ENCODE measurements at regions of chr2 and their contacts with region 1.

Region 1: GRCh38 chr2:161136696-161137324 is 23.4 kb upstream of the TANK start:
- DNase-seq: peak; percentile 87
- ATAC-seq: peak; percentile 80
- H3K4me3 ChIP-seq: peak overlapping the region; percentile 81
- H3K27ac ChIP-seq: peak overlapping the region; percentile 95
- H3K4me1 ChIP-seq: no peaks in the 10 kb centered on the region
- H3K27me3 ChIP-seq: no peaks in the 10 kb centered on the region
- CTCF ChIP-seq: no peak
- EP300 ChIP-seq: no peak; a peak in 1 of 4 replicates
- POLR2A ChIP-seq: peak; percentile 56
- RAD21 ChIP-seq: no peak

Region 2: DNA sequence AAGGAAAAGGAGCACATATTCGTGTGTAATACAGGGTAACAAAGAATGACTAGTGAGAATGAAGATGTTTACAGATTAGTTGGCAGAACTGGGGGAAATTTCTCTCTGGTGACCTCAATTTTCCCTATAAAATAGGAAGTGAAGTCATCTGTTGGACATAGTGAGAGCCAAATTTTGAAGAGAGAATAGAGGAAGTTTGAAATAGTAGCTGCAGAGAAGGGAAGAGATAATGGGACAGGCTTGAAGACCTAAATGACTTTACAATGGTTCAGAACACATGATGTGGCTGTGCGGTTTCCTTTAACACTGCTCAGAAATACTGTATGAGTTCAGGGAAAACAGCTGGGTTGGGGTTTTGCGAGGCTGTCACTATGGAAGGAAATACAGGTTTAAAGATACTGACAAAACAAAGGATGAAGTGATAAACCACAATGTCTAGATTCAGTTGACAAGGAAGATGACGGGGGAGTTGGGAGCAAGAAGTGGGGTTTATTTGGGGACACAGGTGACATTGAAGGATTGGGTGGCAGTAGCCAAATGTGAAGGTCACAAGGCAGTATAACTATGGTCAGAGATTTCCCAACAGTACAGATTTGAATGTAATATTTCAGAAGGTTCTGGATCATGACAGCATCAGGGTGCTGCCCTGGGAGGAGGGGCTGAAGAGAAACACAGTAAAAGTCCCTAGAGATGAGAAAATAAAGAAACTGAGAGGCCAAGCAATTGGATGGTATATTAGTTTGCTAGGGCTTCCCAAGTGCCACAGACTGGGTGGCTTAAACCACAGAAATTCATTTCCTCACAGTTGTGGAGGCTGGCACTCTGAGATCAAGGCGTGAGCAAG is 59.2 kb before region 1 on chr2:
- CTCF ChIA-PET with region 1: interaction called, 4 read pairs
- POLR2A ChIA-PET with region 1: interaction called, 4 read pairs
- RAD21 ChIA-PET with region 1: interaction called, 12 read pairs
- SMC1A ChIA-PET with region 1: interaction called, 12 read pairs
- in situ Hi-C with region 1: no loop called
- intact Hi-C with region 1: loop called (anchors 1 kb)
- DNase-seq: peak; percentile 81
- ATAC-seq: peak; percentile 90
- H3K4me3 ChIP-seq: no peak overlapping the region
- H3K27ac ChIP-seq: peak overlapping the region; percentile 71
- H3K4me1 ChIP-seq: peaks cover 20% of the 10 kb centered on the region
- H3K27me3 ChIP-seq: no peaks in the 10 kb centered on the region
- CTCF ChIP-seq: no peak
- EP300 ChIP-seq: peak; percentile 70 to 74
- POLR2A ChIP-seq: no peak
- RAD21 ChIP-seq: 0 out of 2 replicates have a peak, but pooled peaks have one; percentile 5

Region 3: DNA sequence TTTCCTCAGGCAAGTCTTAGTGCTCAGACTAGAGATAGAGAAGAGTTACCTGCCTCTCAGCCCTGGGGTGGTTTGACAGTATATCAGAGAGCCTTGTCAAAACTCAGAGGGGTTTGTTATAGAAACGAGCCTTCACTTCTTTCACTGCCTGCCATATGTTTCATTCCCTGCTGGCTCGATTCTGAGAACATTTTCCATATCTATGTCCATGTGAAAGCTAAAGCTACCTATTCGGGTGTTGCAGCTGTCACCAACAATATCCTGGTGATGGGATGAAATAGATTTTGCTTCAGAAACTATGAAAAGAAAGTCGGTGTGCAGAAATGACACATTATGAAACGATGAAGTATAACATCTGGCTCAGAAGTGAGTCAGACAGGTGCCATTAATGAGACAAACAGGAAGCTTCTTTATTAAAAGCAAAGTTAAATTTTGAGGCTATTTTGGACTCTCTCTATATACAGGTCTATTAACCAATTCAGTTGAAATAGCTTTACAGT is 32.7 kb before region 1 on chr2:
- CTCF ChIA-PET with region 1: interaction called, 11 read pairs
- POLR2A ChIA-PET with region 1: interaction called, 22 read pairs
- RAD21 ChIA-PET with region 1: interaction called, 71 read pairs
- SMC1A ChIA-PET with region 1: interaction called, 130 read pairs
- in situ Hi-C with region 1: no loop called
- intact Hi-C with region 1: loop called (anchors 1 kb)
- DNase-seq: peak; percentile 72
- ATAC-seq: peak; percentile 89
- H3K4me3 ChIP-seq: 0 out of 2 replicates have a peak overlapping the region, but pooled peaks have one; percentile 6
- H3K27ac ChIP-seq: peak overlapping the region; percentile 55
- H3K4me1 ChIP-seq: peaks cover 19% of the 10 kb centered on the region
- H3K27me3 ChIP-seq: no peaks in the 10 kb centered on the region
- CTCF ChIP-seq: no peak
- EP300 ChIP-seq: peak in 1 of 2 experiments; percentile 89; a peak in 3 of 4 replicates
- POLR2A ChIP-seq: no peak
- RAD21 ChIP-seq: peak; percentile 16; the same call in 1 of the 2 replicates

Region 4: GRCh38 chr2:161122772-161123530 is 13.9 kb before region 1 on chr2:
- CTCF ChIA-PET with region 1: interaction called, 4 read pairs
- POLR2A ChIA-PET with region 1: interaction called, 10 read pairs
- RAD21 ChIA-PET with region 1: interaction called, 11 read pairs
- SMC1A ChIA-PET with region 1: interaction called, 40 read pairs
- in situ Hi-C with region 1: no loop called
- intact Hi-C with region 1: no loop called
- DNase-seq: no peak
- ATAC-seq: peak; percentile 81
- H3K4me3 ChIP-seq: no peak overlapping the region
- H3K27ac ChIP-seq: no peak overlapping the region; the same call in 1 of the 2 replicates
- H3K4me1 ChIP-seq: no peaks in the 10 kb centered on the region
- H3K27me3 ChIP-seq: no peaks in the 10 kb centered on the region
- CTCF ChIP-seq: no peak
- EP300 ChIP-seq: no peak
- POLR2A ChIP-seq: no peak
- RAD21 ChIP-seq: no peak

Region 5: GRCh38 chr2:161166538-161167409 is 30.0 kb after region 1 on chr2:
- CTCF ChIA-PET with region 1: interaction called, 11 read pairs
- POLR2A ChIA-PET with region 1: interaction called, 9 read pairs
- RAD21 ChIA-PET with region 1: interaction called, 10 read pairs
- SMC1A ChIA-PET with region 1: interaction called, 27 read pairs
- in situ Hi-C with region 1: no loop called
- intact Hi-C with region 1: loop called (anchors 5 kb)
- DNase-seq: peak; percentile 95
- ATAC-seq: peak; percentile 77
- H3K4me3 ChIP-seq: peak overlapping the region; percentile 35; the same call in 1 of the 2 replicates
- H3K27ac ChIP-seq: peak overlapping the region; percentile 89
- H3K4me1 ChIP-seq: peaks cover 56% of the 10 kb centered on the region
- H3K27me3 ChIP-seq: no peaks in the 10 kb centered on the region
- CTCF ChIP-seq: no peak
- EP300 ChIP-seq: peak; percentile 91 to 96
- POLR2A ChIP-seq: no peak
- RAD21 ChIP-seq: no peak

Region 6: GRCh38 chr2:161283926-161284325 is 147.1 kb after region 1 on chr2:
- CTCF ChIA-PET with region 1: no interaction called
- POLR2A ChIA-PET with region 1: no interaction called
- RAD21 ChIA-PET with region 1: no interaction called
- SMC1A ChIA-PET with region 1: no interaction called
- in situ Hi-C with region 1: no loop called
- intact Hi-C with region 1: no loop called
- DNase-seq: no peak
- ATAC-seq: no peak
- H3K4me3 ChIP-seq: no peak overlapping the region
- H3K27ac ChIP-seq: no peak overlapping the region
- H3K4me1 ChIP-seq: no peaks in the 10 kb centered on the region
- H3K27me3 ChIP-seq: no peaks in the 10 kb centered on the region
- CTCF ChIP-seq: no peak
- EP300 ChIP-seq: no peak
- POLR2A ChIP-seq: no peak
- RAD21 ChIP-seq: no peak

Measured in GM12878 (cell line).